Breast epithelium (tissue), 4 donors: ENCODE measurements at regions of chr10 and their contacts with region 1.

Region 1: GRCh38 chr10:51266496-51266895 is 192.2 kb downstream of the PRKG1 start:
- DNase-seq: no peak
- H3K4me3 ChIP-seq: no peak overlapping the region
- H3K27ac ChIP-seq: no peak overlapping the region
- H3K4me1 ChIP-seq: no peaks in the 10 kb centered on the region
- H3K27me3 ChIP-seq: no peaks in the 10 kb centered on the region
- CTCF ChIP-seq: no peak
- POLR2A ChIP-seq: no peak

Region 2: GRCh38 chr10:49592726-49593563 is 1673.6 kb before region 1 on chr10:
- intact Hi-C with region 1: no loop called
- DNase-seq: no peak
- H3K4me3 ChIP-seq: no peak overlapping the region
- H3K27ac ChIP-seq: no peak overlapping the region
- H3K4me1 ChIP-seq: no peaks in the 10 kb centered on the region
- H3K27me3 ChIP-seq: peaks cover 0 to 5% of the 10 kb centered on the region in 2 donors
- CTCF ChIP-seq: peak; percentile 18 to 68 (median 49)
- POLR2A ChIP-seq: no peak

Region 3: DNA sequence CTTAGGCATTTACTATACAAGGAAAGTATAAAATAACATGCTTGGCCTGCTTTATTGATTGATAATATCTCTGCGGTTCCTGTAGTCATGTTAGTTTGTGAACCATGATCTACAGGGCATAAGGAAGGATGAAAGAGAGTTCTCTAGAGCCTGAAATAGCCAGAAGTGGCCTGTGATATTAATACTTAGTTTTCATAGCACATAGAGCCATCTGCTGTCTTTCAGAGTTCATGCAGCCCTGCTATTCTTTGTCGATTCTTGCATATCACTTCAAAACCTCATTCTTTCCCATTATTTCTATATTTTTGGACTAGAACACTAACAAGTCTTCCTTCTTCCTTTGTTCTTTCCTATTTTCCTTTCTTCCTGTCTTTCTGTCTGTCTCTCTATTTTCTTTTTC is 218.6 kb before region 1 on chr10:
- intact Hi-C with region 1: no loop called
- DNase-seq: no peak
- H3K4me3 ChIP-seq: no peak overlapping the region
- H3K27ac ChIP-seq: no peak overlapping the region
- H3K4me1 ChIP-seq: no peaks in the 10 kb centered on the region
- H3K27me3 ChIP-seq: no peaks in the 10 kb centered on the region
- CTCF ChIP-seq: peak in 1 of 3 donors; percentile 16
- POLR2A ChIP-seq: no peak

Region 4: DNA sequence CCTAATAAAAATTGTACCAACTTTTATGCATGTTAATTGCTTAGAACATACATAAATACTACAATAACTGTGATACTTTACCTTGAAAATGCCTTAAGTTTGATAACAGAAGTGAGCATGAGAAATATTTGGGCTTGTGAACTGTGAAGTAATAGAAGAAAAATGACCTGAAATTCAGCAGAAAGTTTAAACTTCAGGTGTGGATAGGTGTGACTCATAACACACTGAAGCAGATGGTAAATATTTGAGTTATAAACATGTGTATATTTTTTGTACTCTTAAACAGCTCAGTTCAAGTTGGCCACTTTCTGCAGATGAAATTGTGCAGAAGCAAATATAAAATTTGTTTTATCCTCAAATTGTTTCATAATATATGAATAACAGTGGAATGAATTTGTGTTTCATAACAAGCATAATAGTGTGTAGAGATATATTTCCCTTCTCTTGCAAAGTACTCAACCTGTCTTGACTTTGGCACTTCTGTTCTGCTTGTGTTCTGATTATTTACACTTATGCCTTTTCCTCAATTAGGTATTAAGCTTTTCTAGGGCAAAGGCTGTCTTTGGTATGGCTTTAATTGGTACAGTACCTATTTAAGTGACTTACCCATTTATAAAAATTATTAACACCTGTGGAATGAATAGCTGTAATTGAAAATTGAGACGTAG is 69.9 kb before region 1 on chr10:
- intact Hi-C with region 1: no loop called
- DNase-seq: no peak
- H3K4me3 ChIP-seq: no peak overlapping the region
- H3K27ac ChIP-seq: no peak overlapping the region
- H3K4me1 ChIP-seq: no peaks in the 10 kb centered on the region
- H3K27me3 ChIP-seq: no peaks in the 10 kb centered on the region
- CTCF ChIP-seq: no peak
- POLR2A ChIP-seq: no peak

Region 5: GRCh38 chr10:51239006-51239405 is 27.5 kb before region 1 on chr10:
- intact Hi-C with region 1: no loop called
- DNase-seq: no peak
- H3K4me3 ChIP-seq: no peak overlapping the region
- H3K27ac ChIP-seq: no peak overlapping the region
- H3K4me1 ChIP-seq: no peaks in the 10 kb centered on the region
- H3K27me3 ChIP-seq: no peaks in the 10 kb centered on the region
- CTCF ChIP-seq: no peak
- POLR2A ChIP-seq: no peak

Region 6: DNA sequence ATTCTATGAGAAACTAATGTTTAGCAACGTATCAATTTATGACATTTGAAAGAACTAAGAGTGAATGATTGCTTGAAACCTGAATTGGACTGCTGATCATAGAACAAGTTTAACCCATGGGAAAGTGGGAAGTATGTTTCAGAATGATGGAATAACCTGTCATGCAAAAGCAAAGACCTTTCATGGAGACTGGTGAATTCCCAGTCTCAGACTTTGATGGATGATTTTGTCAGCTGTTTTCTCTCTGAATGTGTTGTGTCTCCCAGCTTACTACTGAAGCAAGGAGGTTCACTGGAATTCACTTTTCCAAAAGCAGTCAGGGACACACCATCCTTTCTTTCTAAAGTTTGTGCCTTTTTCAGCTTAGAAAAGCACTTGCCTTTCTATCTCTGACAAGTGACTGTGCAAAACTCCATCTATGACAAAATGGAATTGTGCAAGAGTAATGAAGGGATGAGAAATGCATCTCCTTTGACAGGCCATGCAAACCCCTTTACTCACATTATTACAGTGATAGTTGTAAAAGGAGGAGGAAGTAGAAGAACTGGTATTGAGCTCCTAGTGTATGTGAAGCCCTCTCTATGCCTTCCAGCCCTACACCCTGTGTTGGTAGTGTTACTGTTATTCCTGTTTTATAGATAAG is 16.1 kb before region 1 on chr10:
- intact Hi-C with region 1: loop called (anchors 2 kb)
- DNase-seq: no peak
- H3K4me3 ChIP-seq: no peak overlapping the region
- H3K27ac ChIP-seq: no peak overlapping the region
- H3K4me1 ChIP-seq: peaks cover 0 to 6% of the 10 kb centered on the region in 2 donors
- H3K27me3 ChIP-seq: no peaks in the 10 kb centered on the region
- CTCF ChIP-seq: no peak
- POLR2A ChIP-seq: no peak